ENCODE measurements at regions of chr2 and their contacts with region 1.

Region 1: GRCh38 chr2:11239666-11240462 is 84.6 kb downstream of the SLC66A3 start:
- DNase-seq: no peak

Region 2: DNA sequence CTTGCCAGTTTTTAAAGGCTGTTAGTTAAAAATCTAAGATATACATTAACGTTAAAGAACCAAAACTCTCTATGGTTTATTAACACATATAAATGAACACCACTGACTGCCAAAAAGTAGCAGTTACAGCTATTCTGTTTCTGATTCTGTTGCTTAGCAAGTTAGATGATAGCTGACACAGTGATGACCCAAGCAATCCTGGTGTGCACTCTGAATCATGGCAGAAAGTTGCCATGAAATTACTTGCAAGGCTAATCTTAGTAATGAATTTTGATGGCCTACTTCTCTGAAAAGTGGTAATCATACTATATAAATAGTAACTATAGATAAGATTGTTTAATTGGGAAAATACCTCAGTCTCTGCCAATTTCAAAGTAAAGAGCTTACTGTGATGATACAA is 46.9 kb after region 1 on chr2:
- intact Hi-C with region 1: no loop called
- DNase-seq: no peak

Region 3: GRCh38 chr2:11320698-11321492 is 81.0 kb after region 1 on chr2:
- intact Hi-C with region 1: no loop called
- DNase-seq: no peak

Region 4: GRCh38 chr2:11411768-11412448 is 172.0 kb after region 1 on chr2:
- intact Hi-C with region 1: loop called in 1 of 2 experiments (anchors 10 kb)
- DNase-seq: no peak

Measured in posterior vena cava (tissue), 2 donors.